Breast epithelium (tissue), 4 donors: ENCODE measurements at regions of chr10 and their contacts with region 1.

Region 1: GRCh38 chr10:128018236-128018635 is 108.0 kb downstream of the MKI67 start:
- DNase-seq: no peak
- H3K4me3 ChIP-seq: peak overlapping the region in 1 of 3 donors; percentile 31
- H3K27ac ChIP-seq: peak overlapping the region in 1 of 2 donors; percentile 19
- H3K4me1 ChIP-seq: no peaks in the 10 kb centered on the region
- H3K27me3 ChIP-seq: no peaks in the 10 kb centered on the region
- CTCF ChIP-seq: no peak
- POLR2A ChIP-seq: no peak

Region 2: DNA sequence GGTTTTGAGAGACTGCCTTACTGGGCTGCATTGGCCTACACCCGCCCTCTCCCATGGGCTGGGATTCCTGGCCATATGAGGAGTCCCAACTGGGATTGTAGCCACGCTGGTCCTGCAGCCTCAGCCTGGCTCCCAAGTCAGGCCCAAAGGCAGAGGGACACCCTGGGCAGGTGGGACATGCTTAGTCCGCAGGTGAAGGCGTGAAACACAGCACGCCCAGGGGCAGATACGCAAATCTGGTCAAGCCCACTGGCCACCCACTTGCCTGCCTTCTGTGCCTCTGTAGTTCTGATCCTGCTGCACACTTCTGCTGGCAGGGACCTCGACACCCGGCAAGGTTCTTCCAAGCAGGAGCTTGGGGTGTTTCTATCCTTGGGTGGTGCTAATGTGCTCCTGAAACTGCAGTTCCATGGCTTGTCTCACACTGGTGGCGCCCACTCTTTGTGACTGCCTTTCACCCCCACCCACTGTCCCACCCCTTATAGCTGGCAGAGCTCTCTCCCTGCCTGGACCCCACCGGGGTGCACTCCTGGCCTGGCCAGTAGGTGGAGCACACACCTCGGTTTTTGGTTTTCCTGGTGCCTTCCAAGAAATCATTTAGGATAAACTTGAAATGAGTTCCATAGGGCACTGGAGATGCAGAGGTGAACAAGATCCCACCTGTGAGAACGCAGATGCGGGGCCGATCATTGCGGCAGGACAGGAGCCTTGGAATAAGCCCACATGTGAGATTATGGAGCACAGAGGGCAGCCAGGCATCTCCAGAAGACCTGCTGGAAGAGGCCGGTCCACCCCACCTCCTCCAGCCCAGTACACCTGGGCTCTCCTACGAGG is 60.1 kb after region 1 on chr10:
- intact Hi-C with region 1: loop called (anchors 2 kb)
- DNase-seq: no peak
- H3K4me3 ChIP-seq: no peak overlapping the region
- H3K27ac ChIP-seq: no peak overlapping the region
- H3K4me1 ChIP-seq: no peaks in the 10 kb centered on the region
- H3K27me3 ChIP-seq: no peaks in the 10 kb centered on the region
- CTCF ChIP-seq: peak in 2 of 3 donors; percentile 32 to 52
- POLR2A ChIP-seq: no peak